Astrocyte of the cerebellum (primary cell): ENCODE measurements at regions of chr20 and their contacts with region 1.

Region 1: DNA sequence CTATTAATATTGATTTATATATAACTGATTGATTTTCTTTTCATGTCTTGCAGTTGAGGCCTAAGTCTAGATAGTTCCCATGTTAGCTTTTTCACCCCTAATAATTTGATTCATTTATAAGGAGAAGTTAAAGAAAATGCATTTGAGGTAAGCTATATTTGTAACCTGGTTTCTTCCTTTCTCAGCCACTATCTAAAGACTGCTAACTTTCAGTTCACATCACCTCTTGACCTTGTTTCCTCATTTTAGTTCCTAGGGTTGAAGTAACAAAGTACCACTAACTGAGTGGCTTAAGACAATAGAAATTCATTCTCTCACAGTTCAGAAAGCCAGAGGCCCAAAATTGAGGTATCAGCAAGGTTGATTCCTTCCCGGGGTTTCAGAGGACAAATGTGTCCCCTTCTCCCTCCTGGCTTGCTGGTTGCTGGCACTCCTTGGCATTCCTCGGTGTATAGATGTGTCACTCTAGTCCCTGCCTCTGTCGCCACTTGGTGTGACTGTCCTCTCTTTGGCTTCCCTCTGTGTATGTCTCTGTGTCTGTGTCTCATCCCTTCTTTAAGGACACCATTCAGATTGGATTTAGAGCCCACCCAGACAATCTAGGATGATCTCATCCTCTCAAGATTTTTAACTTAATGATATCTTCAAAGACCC is 55.9 kb upstream of the C20orf144 start:
- DNase-seq: no peak
- H3K4me3 ChIP-seq: no peak overlapping the region
- CTCF ChIP-seq: no peak

Region 2: GRCh38 chr20:33569802-33570391 is 36.3 kb before region 1 on chr20:
- in situ Hi-C with region 1: loop called (anchors 5 kb)
- DNase-seq: no peak
- H3K4me3 ChIP-seq: no peak overlapping the region
- CTCF ChIP-seq: no peak